IMR-90 (cell line): ENCODE measurements at regions of chr6 and their contacts with region 1.

Region 1: DNA sequence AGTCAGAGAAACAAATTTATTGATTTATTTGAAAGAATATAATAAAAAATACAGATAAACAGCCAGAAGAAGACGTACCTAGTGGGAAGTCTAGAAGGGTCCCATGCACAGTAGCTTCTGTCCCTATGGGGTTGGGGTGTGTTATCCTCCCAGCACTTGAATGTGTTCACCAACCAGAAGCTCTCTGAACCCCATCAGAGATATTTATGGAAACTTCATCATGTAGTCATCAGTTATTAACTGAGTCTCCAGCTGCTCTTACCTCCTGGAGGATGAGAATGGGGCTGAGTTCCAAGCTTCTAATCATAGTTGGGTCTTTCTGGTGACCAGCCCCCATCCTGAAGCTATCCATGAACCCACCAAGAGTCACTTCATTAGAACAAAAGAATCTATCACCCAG is 15.4 kb upstream of the USP45 start:
- DNase-seq: no peak
- ATAC-seq: no peak
- H3K4me3 ChIP-seq: no peak overlapping the region
- H3K27ac ChIP-seq: no peak overlapping the region
- H3K4me1 ChIP-seq: no peaks in the 10 kb centered on the region
- H3K27me3 ChIP-seq: no peaks in the 10 kb centered on the region
- CTCF ChIP-seq: no peak
- POLR2A ChIP-seq: no peak
- RAD21 ChIP-seq: no peak

Region 2: GRCh38 chr6:99425647-99426453 is 104.8 kb before region 1 on chr6:
- CTCF ChIA-PET with region 1: no interaction called
- POLR2A ChIA-PET with region 1: no interaction called
- dilution Hi-C with region 1: no loop called
- in situ Hi-C with region 1: no loop called
- intact Hi-C with region 1: no loop called
- DNase-seq: peak; percentile 89
- ATAC-seq: peak; percentile 66
- H3K4me3 ChIP-seq: peak overlapping the region; percentile 52
- H3K27ac ChIP-seq: peak overlapping the region; percentile 92
- H3K4me1 ChIP-seq: peaks cover 2% of the 10 kb centered on the region
- H3K27me3 ChIP-seq: no peaks in the 10 kb centered on the region
- CTCF ChIP-seq: peak; percentile 54
- POLR2A ChIP-seq: no peak; the same call in 1 of the 2 replicates
- RAD21 ChIP-seq: peak; percentile 28; the same call in 1 of the 2 replicates

Region 3: GRCh38 chr6:99473730-99474129 is 56.9 kb before region 1 on chr6:
- CTCF ChIA-PET with region 1: no interaction called
- POLR2A ChIA-PET with region 1: interaction called, 15 read pairs
- dilution Hi-C with region 1: no loop called
- in situ Hi-C with region 1: no loop called
- intact Hi-C with region 1: no loop called
- DNase-seq: no peak
- ATAC-seq: no peak
- H3K4me3 ChIP-seq: no peak overlapping the region
- H3K27ac ChIP-seq: no peak overlapping the region
- H3K4me1 ChIP-seq: no peaks in the 10 kb centered on the region
- H3K27me3 ChIP-seq: no peaks in the 10 kb centered on the region
- CTCF ChIP-seq: no peak
- POLR2A ChIP-seq: no peak
- RAD21 ChIP-seq: no peak